ENCODE measurements at regions of chr5 and their contacts with region 1.

Region 1: GRCh38 chr5:149186506-149186905 is 45.2 kb downstream of the ABLIM3 start:
- DNase-seq: no peak
- ATAC-seq: no peak
- H3K4me3 ChIP-seq: no peak overlapping the region
- H3K27ac ChIP-seq: no peak overlapping the region
- H3K4me1 ChIP-seq: no peaks in the 10 kb centered on the region
- H3K27me3 ChIP-seq: no peaks in the 10 kb centered on the region
- CTCF ChIP-seq: no peak

Region 2: GRCh38 chr5:148887123-148887881 is 299.2 kb before region 1 on chr5:
- CTCF ChIA-PET with region 1: no interaction called
- POLR2A ChIA-PET with region 1: no interaction called
- in situ Hi-C with region 1: no loop called
- intact Hi-C with region 1: no loop called
- DNase-seq: no peak
- ATAC-seq: no peak
- H3K4me3 ChIP-seq: no peak overlapping the region
- H3K27ac ChIP-seq: no peak overlapping the region
- H3K4me1 ChIP-seq: no peaks in the 10 kb centered on the region
- H3K27me3 ChIP-seq: no peaks in the 10 kb centered on the region
- CTCF ChIP-seq: no peak

Region 3: DNA sequence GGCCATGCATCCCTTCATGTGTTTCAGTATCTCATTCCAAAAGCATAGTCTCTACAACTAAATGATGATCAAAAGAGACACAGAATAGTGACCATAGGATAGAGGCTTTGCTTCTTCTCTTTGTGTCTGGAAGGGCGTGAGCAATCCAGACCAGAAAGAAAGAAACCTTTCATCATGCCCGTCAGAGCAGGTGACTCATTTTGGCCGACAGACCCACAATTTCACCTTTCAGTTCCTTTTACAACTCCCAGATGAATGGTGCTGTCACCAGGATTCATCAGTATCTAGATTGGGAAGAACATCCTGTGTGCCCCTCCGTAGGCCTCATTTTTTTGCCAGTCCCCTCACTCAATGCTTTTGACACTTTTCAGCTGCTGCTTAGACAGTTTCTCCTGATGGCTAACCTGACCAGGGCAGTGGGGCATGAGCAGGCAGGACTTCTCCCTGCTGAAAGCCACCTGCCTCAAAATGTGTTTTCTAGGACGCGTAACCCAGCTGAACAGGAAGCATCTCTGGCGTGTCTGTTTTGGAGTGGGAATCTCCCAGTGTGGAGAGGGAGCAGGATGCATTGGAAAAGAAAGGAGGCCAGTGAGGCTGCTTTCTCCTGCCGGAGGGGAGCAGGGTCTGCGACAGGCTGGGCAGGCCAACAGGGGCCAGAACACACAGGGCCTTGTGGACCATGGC is 24.0 kb before region 1 on chr5:
- CTCF ChIA-PET with region 1: no interaction called
- POLR2A ChIA-PET with region 1: no interaction called
- in situ Hi-C with region 1: no loop called
- intact Hi-C with region 1: no loop called
- DNase-seq: no peak
- ATAC-seq: peak; percentile 55; the same call in 1 of the 2 replicates
- H3K4me3 ChIP-seq: no peak overlapping the region
- H3K27ac ChIP-seq: 0 out of 2 replicates have a peak overlapping the region, but pooled peaks have one; percentile 23
- H3K4me1 ChIP-seq: no peaks in the 10 kb centered on the region; the same call in 1 of the 2 replicates
- H3K27me3 ChIP-seq: no peaks in the 10 kb centered on the region
- CTCF ChIP-seq: no peak

Region 4: GRCh38 chr5:149221731-149222342 is 35.3 kb after region 1 on chr5:
- CTCF ChIA-PET with region 1: interaction called, 12 read pairs
- POLR2A ChIA-PET with region 1: no interaction called
- in situ Hi-C with region 1: no loop called
- intact Hi-C with region 1: no loop called
- DNase-seq: no peak
- ATAC-seq: no peak
- H3K4me3 ChIP-seq: no peak overlapping the region
- H3K27ac ChIP-seq: no peak overlapping the region
- H3K4me1 ChIP-seq: no peaks in the 10 kb centered on the region
- H3K27me3 ChIP-seq: no peaks in the 10 kb centered on the region
- CTCF ChIP-seq: no peak

Measured in Panc1 (cell line).